SK-N-SH (cell line): ENCODE measurements at regions of chr11 and their contacts with region 1.

Region 1: GRCh38 chr11:34468209-34468841 is 29.6 kb downstream of the CAT start:
- DNase-seq: peak; percentile 18
- H3K4me3 ChIP-seq: no peak overlapping the region
- H3K27ac ChIP-seq: no peak overlapping the region
- H3K4me1 ChIP-seq: no peaks in the 10 kb centered on the region
- H3K27me3 ChIP-seq: no peaks in the 10 kb centered on the region
- CTCF ChIP-seq: peak; percentile 35
- EP300 ChIP-seq: no peak
- RAD21 ChIP-seq: peak; percentile 59

Region 2: DNA sequence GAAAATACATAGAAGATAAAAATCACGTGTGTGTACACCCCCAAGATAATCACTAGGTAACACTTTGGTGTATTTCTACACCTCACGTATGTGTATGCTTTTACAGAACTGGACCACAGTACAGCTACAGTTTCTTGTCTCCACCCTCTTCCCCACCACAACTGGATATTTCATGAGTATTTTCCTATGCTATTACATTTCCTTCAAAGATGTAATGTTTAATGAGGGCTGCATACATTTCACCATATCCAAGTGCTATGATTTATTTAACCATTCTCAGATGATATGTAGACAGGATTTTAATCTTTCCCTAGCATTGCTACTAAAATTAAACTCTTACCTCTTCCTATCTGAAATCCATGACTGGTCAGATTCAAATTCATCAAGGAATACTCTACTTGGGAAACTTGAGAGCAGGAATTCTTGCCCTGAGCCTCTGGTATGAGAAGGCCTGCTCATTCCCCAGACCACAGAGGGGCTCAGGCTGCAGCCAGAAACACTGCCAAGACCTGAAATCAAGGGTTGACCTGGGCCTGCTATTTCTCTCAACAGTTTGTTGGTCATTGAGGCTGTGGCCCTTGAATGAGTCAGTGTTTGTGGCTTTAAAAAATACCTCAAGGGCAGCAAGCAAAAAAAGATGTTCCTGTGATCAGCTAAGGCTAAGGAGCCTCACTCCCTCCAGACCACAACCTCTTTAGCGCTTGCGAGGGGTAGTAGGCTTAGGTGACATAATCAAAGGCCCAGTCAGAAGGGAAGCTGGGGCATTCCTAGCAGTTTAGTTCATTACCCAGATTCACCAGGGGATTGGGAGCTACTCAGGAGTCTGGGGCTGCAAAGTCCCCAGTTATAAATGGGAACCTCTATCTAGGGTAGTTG is 166.0 kb before region 1 on chr11:
- CTCF ChIA-PET with region 1: no interaction called
- POLR2A ChIA-PET with region 1: no interaction called
- DNase-seq: no peak
- H3K4me3 ChIP-seq: no peak overlapping the region
- H3K27ac ChIP-seq: peak overlapping the region; percentile 71 to 73
- H3K4me1 ChIP-seq: peaks cover 37 to 41% of the 10 kb centered on the region in 2 experiments
- H3K27me3 ChIP-seq: no peaks in the 10 kb centered on the region
- CTCF ChIP-seq: no peak
- EP300 ChIP-seq: peak; percentile 32 to 89; a peak in 3 of 4 replicates
- RAD21 ChIP-seq: no peak

Region 3: DNA sequence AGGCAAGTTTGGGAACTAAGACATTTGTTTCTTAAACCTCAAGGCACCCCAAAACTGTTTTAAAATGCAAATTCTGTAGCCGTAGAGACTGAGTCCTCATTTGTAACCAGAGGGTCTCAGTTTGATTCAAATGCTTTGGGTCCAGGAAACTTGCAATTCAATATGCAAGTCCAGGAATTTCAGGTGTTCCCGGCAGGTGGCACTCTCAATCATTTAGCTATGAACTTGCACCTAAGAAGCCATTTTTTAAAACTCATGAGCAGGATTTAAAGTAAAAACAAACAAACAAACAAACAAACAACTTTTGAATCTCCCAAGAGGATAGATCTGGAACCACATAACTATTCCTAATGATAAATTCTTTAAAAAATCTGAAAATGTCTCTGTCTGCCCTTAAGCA is 101.8 kb before region 1 on chr11:
- CTCF ChIA-PET with region 1: interaction called, 28 read pairs
- POLR2A ChIA-PET with region 1: no interaction called
- DNase-seq: peak; percentile 36
- H3K4me3 ChIP-seq: no peak overlapping the region
- H3K27ac ChIP-seq: no peak overlapping the region
- H3K4me1 ChIP-seq: peaks cover 0 to 7% of the 10 kb centered on the region in 2 experiments; a peak in 2 of 4 replicates
- H3K27me3 ChIP-seq: no peaks in the 10 kb centered on the region
- CTCF ChIP-seq: peak; percentile 42
- EP300 ChIP-seq: no peak
- RAD21 ChIP-seq: peak; percentile 59

Region 4: DNA sequence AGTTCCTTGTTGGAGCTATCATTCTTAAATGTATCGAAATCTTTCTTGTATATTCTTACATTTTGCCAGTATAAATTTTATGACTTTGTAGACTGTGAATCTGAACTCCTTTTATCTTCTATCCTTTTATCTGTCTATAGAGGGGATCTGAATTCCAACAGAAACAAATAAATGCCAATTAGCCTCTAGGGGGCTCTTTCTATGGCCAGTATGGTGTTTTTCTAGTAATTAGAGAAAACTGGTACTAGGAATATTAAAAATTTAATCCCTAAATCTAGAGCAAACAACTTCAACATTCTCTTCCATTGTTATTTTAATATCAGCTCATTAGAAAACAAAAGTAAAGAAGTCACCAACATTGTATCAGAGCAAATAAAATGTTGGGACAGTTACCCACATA is 51.1 kb before region 1 on chr11:
- CTCF ChIA-PET with region 1: no interaction called
- POLR2A ChIA-PET with region 1: no interaction called
- DNase-seq: no peak
- H3K4me3 ChIP-seq: no peak overlapping the region
- H3K27ac ChIP-seq: no peak overlapping the region
- H3K4me1 ChIP-seq: no peaks in the 10 kb centered on the region
- H3K27me3 ChIP-seq: no peaks in the 10 kb centered on the region
- CTCF ChIP-seq: peak; percentile 44
- EP300 ChIP-seq: no peak
- RAD21 ChIP-seq: no peak

Region 5: GRCh38 chr11:34439610-34440198 is 28.6 kb before region 1 on chr11:
- CTCF ChIA-PET with region 1: no interaction called
- POLR2A ChIA-PET with region 1: no interaction called
- DNase-seq: peak; percentile 22
- H3K4me3 ChIP-seq: peak overlapping the region; percentile 91 to 92
- H3K27ac ChIP-seq: peak overlapping the region; percentile 61 to 97; a peak in 3 of 4 replicates
- H3K4me1 ChIP-seq: peaks cover 9 to 14% of the 10 kb centered on the region in 2 experiments; a peak in 3 of 4 replicates
- H3K27me3 ChIP-seq: no peaks in the 10 kb centered on the region
- CTCF ChIP-seq: no peak
- EP300 ChIP-seq: no peak
- RAD21 ChIP-seq: no peak

Region 6: GRCh38 chr11:34480314-34480713 is 12.0 kb after region 1 on chr11:
- CTCF ChIA-PET with region 1: interaction called, 14 read pairs
- POLR2A ChIA-PET with region 1: no interaction called
- DNase-seq: no peak
- H3K4me3 ChIP-seq: no peak overlapping the region
- H3K27ac ChIP-seq: no peak overlapping the region
- H3K4me1 ChIP-seq: no peaks in the 10 kb centered on the region
- H3K27me3 ChIP-seq: peaks cover 4% of the 10 kb centered on the region; the same call in 1 of the 2 replicates
- CTCF ChIP-seq: no peak
- EP300 ChIP-seq: no peak
- RAD21 ChIP-seq: no peak